GM10248 (cell line): ENCODE measurements at regions of chr1 and their contacts with region 1.

Region 1: DNA sequence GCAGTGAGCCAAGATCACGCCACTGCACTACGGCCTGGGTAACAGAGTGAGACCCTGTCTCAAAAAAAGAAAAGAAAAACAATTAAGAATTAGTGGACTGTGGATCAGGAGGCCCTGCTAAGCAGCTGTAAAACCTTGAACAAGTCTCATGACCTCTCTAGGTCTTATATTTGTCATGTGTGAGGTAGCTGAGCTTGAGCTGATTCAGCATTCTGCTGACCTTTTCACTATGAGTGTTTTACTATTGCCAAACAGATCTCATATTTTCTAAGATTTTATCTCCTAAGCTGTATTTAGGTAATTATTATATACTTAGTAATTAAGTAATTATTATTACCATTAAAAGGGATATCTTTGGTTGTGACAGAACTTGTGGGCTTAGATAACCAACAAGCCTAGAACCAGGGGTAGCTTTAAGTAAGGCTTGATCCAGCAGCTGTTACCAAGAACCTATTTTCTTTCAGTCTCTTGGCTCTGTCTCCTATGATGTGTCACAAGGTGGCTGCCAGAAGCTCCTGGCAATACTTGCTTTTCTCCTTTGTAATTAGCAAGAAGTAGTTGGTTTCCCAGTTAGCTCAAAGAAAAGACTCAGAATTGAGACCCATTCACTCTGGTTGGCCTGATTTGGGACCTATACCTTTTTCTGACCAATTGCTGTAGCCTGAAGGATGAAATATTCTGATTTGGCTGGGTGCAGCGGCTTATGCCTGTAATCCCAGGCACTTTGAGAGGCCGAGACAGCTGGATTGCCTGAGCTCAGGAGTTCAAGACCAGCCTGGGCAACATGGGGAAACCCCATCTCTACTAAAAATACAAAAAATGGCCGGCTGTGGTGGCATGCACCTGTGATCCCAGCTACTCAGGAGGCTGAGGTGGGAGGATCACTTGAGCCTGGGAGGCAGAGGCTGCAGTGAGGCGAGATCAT is 8.5 kb upstream of the ZC3H12A start:
- DNase-seq: no peak
- CTCF ChIP-seq: no peak

Region 2: GRCh38 chr1:37449936-37450335 is 15.9 kb before region 1 on chr1:
- CTCF ChIA-PET with region 1: interaction called, 105 read pairs
- POLR2A ChIA-PET with region 1: no interaction called
- DNase-seq: no peak
- CTCF ChIP-seq: no peak

Region 3: DNA sequence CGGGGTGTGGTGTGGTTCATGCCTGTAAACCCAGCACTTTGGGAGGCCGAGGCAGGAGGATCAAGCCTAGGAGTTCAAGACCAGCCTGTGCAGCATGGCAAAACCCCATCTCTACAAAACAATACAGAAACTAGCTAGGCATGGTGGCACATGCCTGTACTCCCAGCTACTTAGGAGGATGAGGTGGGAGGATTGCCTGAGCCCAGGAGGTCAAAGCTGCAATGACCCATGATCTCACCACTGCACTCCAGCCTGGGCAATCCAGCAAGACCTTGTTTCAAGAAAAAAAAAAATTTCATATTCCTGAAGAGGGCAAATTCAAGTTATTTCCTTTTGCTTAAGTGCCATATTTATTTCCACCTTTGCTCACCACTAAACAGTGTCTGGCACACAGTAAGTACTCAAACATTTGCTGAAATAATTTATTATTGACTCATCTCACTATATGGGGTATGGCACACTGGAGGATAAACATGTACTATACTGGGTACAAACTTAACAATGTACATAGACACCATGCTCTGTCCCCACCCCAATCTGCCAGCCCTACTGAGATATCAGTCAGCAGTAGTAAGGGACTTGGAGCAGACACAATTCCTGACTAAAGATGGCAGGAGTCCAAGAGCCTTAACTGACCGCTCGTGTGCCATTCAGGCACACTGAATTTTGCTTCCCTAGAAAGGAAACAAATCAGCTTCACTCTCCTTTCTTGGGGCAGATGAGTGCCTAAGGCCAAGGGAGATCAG is 33.2 kb after region 1 on chr1:
- CTCF ChIA-PET with region 1: no interaction called
- POLR2A ChIA-PET with region 1: no interaction called
- DNase-seq: no peak
- CTCF ChIP-seq: no peak